Ovary (tissue), 10 donors: ENCODE measurements at regions of chr20 and their contacts with region 1.

Region 1: DNA sequence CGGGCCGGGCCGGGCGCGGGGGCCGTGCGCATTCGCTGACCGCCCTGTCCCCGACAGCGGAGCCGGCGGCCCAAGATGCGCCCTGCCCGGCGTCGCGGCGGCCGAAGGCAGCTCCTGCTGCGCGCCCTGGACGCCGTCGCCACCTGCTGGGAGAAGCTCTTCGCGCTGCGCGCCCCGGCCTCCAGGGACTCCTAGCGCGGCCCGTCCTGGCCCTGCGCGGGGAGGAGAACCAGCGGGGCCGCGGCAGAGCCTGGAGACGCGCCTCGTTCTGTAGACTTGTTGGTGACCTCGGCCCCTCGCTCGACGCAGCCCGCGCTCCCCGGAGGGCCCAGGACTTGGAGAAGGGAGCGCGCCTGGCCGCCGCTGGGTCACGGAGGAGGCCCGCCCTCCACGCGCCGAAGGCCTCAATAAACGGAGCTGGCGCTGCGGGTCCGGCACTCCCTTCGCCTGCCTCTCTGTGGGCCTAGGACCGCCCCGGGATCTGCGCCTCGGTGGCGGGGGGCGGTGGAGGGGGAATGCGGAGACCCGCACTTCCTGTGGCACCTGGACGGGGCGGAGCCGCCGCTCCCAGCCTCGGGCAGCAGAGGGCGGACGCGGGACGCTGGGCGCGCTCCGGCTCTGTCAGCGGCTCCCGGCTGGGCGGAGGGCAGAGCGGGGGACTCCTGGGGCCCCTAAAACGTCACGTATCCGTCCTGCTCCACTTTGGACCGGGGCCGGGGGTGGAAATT is 2.7 kb downstream of the C20orf204 start:
- DNase-seq: peak; percentile 37 to 75 (median 63)
- H3K4me3 ChIP-seq: peak overlapping the region; percentile 32
- H3K27ac ChIP-seq: no peak overlapping the region
- H3K4me1 ChIP-seq: peaks cover 5% of the 10 kb centered on the region
- H3K27me3 ChIP-seq: peaks cover 2% of the 10 kb centered on the region
- CTCF ChIP-seq: peak; percentile 29 to 65 (median 44)
- EP300 ChIP-seq: no peak
- POLR2A ChIP-seq: no peak

Region 2: DNA sequence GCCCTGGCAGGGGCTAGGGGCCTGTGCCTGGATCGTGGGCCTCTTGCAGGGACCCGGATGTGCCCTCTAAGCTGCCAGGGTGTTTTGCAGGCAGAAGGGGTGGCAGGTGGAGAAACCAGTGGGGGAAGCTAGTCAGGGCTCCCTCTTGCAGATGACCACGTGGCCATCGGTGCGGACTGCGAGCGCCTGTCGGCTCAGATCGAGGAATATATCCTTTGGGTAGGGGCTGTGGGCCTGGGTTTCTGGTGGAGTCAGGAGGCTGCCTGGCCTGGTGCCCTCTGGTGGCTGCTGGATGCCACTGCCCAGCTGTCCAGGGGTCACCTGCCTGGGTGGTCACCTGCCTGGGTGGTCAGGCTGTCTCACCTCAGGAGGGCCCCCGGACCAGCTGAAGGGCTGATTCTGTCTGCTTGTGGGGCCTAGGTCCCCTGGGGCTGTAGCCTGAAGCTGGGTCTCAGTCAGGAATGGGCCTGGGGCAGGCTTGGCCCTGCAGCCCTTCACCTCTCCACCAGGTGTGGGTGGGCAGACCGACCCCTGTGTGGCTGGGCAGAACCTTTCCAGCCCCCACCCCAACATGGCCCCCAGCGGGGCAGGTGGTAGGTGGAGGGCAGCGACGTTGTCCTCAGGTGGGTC is 31.0 kb after region 1 on chr20:
- intact Hi-C with region 1: no loop called
- DNase-seq: no peak
- H3K4me3 ChIP-seq: no peak overlapping the region
- H3K27ac ChIP-seq: no peak overlapping the region
- H3K4me1 ChIP-seq: no peaks in the 10 kb centered on the region
- H3K27me3 ChIP-seq: no peaks in the 10 kb centered on the region
- CTCF ChIP-seq: no peak
- EP300 ChIP-seq: no peak
- POLR2A ChIP-seq: no peak

Region 3: DNA sequence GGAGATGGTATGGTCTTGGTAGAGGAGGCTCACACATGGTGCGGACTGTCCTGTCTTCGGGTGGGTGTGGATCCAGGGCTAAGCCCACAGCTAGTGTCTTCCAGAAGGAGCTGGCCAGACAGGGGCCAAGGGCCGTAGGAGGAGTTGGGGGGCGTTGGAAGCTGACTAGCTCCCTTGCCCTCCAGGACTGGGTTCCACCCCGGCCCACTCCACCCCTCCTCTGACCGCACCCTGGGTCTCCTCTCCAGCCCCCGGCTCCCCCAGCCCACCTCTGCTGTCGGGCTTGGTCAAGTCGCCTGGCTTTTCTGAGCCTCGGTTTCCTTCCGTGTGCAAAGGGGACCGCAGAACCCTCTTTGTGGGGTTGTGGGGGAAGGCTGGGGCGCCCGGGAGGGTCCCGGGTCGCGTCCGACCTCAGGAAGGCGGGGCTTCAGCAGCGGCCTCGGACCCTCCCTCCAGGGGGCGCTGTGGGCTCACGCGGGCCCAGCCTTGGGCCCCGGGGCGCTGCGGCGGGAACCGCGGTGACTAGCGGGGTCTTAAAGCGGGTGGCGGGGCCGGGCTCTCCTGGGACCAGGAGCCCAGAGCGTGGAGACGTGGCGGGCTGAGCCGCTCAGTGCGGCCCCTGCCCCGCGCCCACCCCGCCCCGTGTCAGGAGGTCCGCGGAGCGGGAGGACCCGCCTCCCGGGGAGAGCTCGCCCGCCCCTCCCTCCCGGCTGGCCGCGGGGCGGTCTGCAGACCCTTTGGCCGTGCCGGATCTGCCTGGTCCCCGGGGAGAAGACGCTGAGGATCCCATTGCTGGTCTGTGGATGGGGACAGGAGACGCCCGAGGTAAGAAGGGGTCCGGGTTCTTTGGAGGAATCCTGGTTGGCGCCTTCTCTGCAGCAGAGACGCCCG is 63.2 kb after region 1 on chr20:
- intact Hi-C with region 1: no loop called
- DNase-seq: peak in 1 of 5 donors; percentile 27
- H3K4me3 ChIP-seq: no peak overlapping the region
- H3K27ac ChIP-seq: no peak overlapping the region
- H3K4me1 ChIP-seq: no peaks in the 10 kb centered on the region
- H3K27me3 ChIP-seq: no peaks in the 10 kb centered on the region
- CTCF ChIP-seq: no peak
- EP300 ChIP-seq: no peak
- POLR2A ChIP-seq: no peak

Region 4: DNA sequence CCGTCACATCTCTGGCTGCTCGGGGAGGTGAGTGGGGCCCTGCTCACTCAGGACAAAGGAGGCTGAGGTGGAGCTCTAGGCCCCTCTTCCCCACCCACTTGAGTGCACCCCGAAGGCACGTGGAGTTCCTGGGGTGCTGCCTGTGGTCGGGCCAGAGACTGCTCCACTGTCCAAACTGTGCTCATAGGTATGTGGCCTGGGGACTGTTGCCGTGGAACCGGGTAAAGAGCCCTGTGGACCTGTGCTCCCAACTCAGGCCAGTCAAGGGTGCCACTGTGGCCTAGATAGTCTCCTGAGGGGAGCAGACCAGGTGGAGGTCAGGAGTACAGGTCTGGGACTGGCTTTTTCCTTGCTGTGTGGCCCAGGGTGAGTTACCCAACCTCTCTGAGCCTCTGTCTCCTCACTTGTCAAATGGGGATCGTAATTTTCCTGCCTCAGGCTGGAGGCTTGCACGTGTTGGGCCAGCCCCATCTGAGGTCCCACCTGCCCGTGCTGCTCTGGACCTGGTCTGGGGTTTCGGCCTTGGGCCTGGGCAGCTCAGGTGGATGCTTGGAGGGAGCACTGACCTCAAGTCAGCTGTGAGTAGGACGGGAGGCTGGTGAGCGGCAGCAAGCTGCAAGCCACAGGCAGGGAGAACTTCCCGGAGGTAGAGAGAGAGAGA is 81.1 kb after region 1 on chr20:
- intact Hi-C with region 1: loop called in 1 of 4 experiments (anchors 10 kb)
- DNase-seq: peak in 2 of 5 donors; percentile 6 to 31
- H3K4me3 ChIP-seq: no peak overlapping the region
- H3K27ac ChIP-seq: no peak overlapping the region
- H3K4me1 ChIP-seq: peaks cover 2% of the 10 kb centered on the region
- H3K27me3 ChIP-seq: no peaks in the 10 kb centered on the region
- CTCF ChIP-seq: no peak
- EP300 ChIP-seq: no peak
- POLR2A ChIP-seq: no peak

Region 5: DNA sequence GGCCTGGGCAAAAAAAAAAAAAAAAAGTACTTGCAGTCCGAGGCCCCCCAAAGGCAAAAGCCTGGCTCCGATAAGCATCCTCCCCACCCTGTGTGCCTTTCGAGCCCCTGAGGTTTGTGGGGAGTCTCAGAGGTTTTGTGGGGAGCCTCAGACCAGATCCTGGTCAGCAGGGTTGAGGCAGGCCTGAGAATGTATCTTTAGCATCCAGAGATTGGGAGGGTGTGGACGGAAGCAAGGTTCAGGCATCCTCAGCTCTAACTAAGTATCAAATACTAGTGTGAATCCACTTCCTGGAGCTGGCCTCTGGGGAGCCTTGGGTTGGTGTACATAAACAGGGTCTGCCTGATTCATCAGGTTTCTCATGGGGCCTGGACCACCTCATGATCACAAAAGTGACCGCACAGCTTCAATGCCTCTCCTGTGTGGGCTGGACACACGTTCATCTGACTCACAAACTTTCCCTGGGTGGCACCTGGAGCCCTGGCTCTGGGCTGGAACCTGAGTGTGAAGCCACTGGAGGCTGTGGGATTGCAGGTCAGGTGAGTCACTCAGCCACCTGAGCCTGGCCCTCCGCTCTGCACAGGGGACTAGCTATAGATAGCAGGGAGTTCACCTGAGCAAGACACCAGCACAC is 241.2 kb after region 1 on chr20:
- intact Hi-C with region 1: no loop called
- DNase-seq: no peak
- H3K4me3 ChIP-seq: no peak overlapping the region
- H3K27ac ChIP-seq: no peak overlapping the region
- H3K4me1 ChIP-seq: no peaks in the 10 kb centered on the region
- H3K27me3 ChIP-seq: no peaks in the 10 kb centered on the region
- CTCF ChIP-seq: no peak
- EP300 ChIP-seq: no peak
- POLR2A ChIP-seq: no peak